ENCODE measurements at regions of chr2 and their contacts with region 1.

Region 1: DNA sequence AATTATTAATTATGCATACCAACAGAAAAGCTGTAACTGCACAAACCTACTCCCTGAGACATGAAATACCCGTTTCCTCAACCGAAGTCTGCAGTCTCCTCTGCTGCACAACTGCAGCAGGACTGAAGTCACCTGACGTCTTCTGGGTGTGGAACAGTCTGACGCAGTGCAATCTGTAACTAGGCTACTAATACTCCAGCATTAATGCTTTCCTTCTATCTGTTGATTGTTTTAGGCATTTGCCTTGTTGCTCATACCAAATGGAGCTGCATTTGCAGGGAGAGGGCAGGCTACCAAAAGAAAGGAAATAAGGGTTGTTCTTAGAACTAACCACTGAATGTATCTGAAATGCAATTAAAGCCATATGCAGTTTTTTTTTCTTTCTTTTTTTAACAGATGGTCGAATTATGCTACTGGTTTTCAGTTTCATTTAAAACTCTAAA is 40.1 kb downstream of the RTN4 start:
- DNase-seq: no peak
- ATAC-seq: peak; percentile 96
- H3K4me3 Mint-ChIP-seq: peak overlapping the region; percentile 84
- H3K27ac Mint-ChIP-seq: peak overlapping the region; percentile 67
- H3K4me1 Mint-ChIP-seq: peaks cover 63% of the 10 kb centered on the region
- H3K27me3 Mint-ChIP-seq: no peaks in the 10 kb centered on the region
- CTCF ChIP-seq: no peak

Region 2: DNA sequence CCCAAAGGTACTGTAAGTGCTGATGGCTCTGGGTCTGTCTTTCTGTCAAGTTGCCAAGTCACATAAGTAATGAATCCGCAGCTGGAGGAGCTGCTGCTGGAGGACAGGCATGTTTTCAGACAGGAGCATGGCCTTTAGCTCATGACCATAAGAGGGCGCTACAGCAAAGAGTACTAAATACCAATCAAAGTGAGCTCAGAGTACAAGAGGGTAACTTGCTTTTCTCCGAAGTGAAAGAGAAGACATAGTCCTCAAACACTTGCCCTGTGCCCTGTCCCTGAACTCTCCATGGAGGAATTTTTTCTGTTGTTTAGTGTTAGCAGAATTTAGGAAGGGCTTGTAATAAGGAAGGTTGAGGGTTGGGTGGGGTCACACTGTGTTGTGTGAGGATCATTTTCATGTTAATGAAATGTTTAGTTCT is 344.7 kb before region 1 on chr2:
- CTCF ChIA-PET with region 1: interaction called, 3 read pairs
- POLR2A ChIA-PET with region 1: no interaction called
- intact Hi-C with region 1: loop called (anchors 10 kb)
- DNase-seq: no peak
- ATAC-seq: peak; percentile 52
- H3K4me3 Mint-ChIP-seq: no peak overlapping the region
- H3K27ac Mint-ChIP-seq: no peak overlapping the region
- H3K4me1 Mint-ChIP-seq: no peaks in the 10 kb centered on the region
- H3K27me3 Mint-ChIP-seq: no peaks in the 10 kb centered on the region
- CTCF ChIP-seq: no peak

Region 3: GRCh38 chr2:54723131-54723995 is 286.8 kb before region 1 on chr2 and contains the start of gene EML6:
- CTCF ChIA-PET with region 1: no interaction called
- POLR2A ChIA-PET with region 1: no interaction called
- intact Hi-C with region 1: no loop called
- DNase-seq: peak; percentile 97
- ATAC-seq: peak; percentile 95
- H3K4me3 Mint-ChIP-seq: peak within 1 kb of the TSS; percentile 95
- H3K27ac Mint-ChIP-seq: peak within 1 kb of the TSS; percentile 74
- H3K4me1 Mint-ChIP-seq: peaks cover 26% of the 10 kb centered on the region
- H3K27me3 Mint-ChIP-seq: peaks cover 9% of the 10 kb centered on the region
- CTCF ChIP-seq: no peak
- total RNA-seq, gene EML6: 25.3 and 31.5 TPM in 2 replicates

Region 4: GRCh38 chr2:54999182-54999581 is 11.0 kb before region 1 on chr2:
- CTCF ChIA-PET with region 1: interaction called, 4 read pairs
- POLR2A ChIA-PET with region 1: interaction called, 3 read pairs
- intact Hi-C with region 1: loop called (anchors 1 kb)
- DNase-seq: no peak
- ATAC-seq: no peak
- H3K4me3 Mint-ChIP-seq: no peak overlapping the region
- H3K27ac Mint-ChIP-seq: no peak overlapping the region
- H3K4me1 Mint-ChIP-seq: peaks cover 73% of the 10 kb centered on the region
- H3K27me3 Mint-ChIP-seq: no peaks in the 10 kb centered on the region
- CTCF ChIP-seq: no peak

Measured in activated B cell treated with CpG ODN at 0.5 μM for 24 hours (primary cell).